ENCODE measurements at regions of chr12 and their contacts with region 1.

Region 1: GRCh38 chr12:123614531-123614930 is 12.6 kb downstream of the DDX55 start:
- DNase-seq: no peak
- H3K4me3 ChIP-seq: no peak overlapping the region
- H3K27ac ChIP-seq: no peak overlapping the region
- H3K4me1 ChIP-seq: no peaks in the 10 kb centered on the region
- H3K27me3 ChIP-seq: no peaks in the 10 kb centered on the region
- CTCF ChIP-seq: no peak

Region 2: DNA sequence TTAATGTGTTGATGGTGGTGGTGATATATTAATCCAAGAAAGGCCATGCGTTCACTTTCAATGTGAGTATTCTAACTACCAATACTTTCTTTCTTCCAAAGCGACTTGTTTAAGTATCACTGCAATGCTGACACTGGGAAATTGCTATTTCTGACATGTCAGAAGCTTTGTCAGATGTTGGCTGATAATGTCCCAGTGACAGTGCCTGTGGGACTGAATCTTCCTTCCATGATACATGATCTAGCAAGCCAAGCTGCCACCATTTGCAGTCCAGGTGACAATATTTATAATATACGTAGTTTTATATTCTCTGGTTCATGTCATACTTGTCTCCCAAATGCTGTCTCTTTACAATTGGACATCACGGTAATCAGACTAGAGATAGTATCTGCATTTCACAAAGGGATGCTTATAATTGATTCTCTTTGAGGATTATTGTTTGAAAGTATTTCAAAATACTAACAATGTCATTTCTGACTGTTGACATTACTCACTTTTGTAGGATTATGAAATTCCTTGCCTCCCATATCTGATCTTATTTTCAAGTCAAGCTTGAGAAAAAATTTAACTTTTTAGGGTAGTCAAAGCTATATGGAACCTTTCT is 1030.3 kb before region 1 on chr12:
- CTCF ChIA-PET with region 1: interaction called, 10 read pairs
- POLR2A ChIA-PET with region 1: no interaction called
- intact Hi-C with region 1: no loop called
- DNase-seq: no peak
- H3K4me3 ChIP-seq: no peak overlapping the region
- H3K27ac ChIP-seq: no peak overlapping the region
- H3K4me1 ChIP-seq: no peaks in the 10 kb centered on the region
- H3K27me3 ChIP-seq: no peaks in the 10 kb centered on the region
- CTCF ChIP-seq: no peak

Region 3: GRCh38 chr12:123591702-123592481 is 22.6 kb before region 1 on chr12:
- CTCF ChIA-PET with region 1: interaction called, 15 read pairs
- POLR2A ChIA-PET with region 1: no interaction called
- intact Hi-C with region 1: no loop called
- DNase-seq: no peak
- H3K4me3 ChIP-seq: no peak overlapping the region
- H3K27ac ChIP-seq: no peak overlapping the region
- H3K4me1 ChIP-seq: peaks cover 12% of the 10 kb centered on the region; the same call in 1 of the 2 replicates
- H3K27me3 ChIP-seq: no peaks in the 10 kb centered on the region
- CTCF ChIP-seq: no peak

Region 4: GRCh38 chr12:123601602-123602489 is 12.7 kb before region 1 on chr12 and contains the start of gene DDX55:
- CTCF ChIA-PET with region 1: no interaction called
- POLR2A ChIA-PET with region 1: interaction called, 10 read pairs
- intact Hi-C with region 1: no loop called
- DNase-seq: peak; percentile 63 to 79
- H3K4me3 ChIP-seq: peak within 1 kb of the TSS; percentile 97
- H3K27ac ChIP-seq: peak within 1 kb of the TSS; percentile 45
- H3K4me1 ChIP-seq: 0 out of 2 replicates have a peak, but pooled peaks cover 5% of the 10 kb centered on the region
- H3K27me3 ChIP-seq: no peaks in the 10 kb centered on the region
- CTCF ChIP-seq: peak; percentile 61
- total RNA-seq, gene DDX55: 17.5 and 19.5 TPM in 2 replicates

Measured in PC-9 (cell line).